Right ventricle myocardium inferior (tissue), 1 donor: ENCODE measurements at regions of chr1 and their contacts with region 1.

Region 1: DNA sequence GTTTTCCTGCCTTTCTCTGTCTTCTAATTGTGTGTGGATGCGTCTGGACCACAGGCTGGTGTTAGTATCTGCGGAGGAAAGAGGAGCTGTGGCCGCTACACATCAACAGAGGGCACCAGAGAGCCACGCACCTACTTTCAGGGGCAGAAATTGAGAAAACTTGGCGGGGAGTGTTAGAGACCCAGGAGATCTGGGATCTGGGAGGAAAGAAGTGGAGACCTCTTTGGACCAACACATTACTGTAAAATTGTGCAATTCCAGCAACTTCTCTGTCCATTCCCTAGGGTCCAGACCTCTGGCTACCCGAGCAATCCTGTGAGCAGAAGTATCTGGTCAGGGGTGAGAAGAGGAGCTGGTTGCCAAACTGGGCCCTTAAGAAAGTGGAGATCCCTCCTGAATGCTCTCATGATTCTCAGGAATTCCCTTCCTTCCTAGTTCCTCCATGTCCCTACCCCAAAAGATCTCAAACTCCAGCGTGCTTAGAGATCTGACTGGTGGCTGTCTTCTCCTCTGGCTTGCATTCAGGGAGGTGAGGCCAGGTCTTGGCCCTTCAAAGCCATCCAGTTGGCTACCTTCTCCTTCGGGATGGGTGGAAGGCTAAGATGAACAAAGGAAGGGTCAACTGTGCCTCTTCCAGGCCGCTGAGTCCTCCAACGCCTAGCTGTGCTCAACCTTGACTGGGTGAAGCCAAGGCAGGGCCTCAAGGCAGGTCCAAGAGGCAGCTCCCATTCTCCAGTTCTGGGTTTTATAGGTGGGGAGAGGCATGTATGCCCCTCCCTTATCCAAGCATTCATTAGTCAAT is 1.2 kb upstream of the KIRREL1 start:
- DNase-seq: no peak
- ATAC-seq: peak; percentile 78

Region 2: GRCh38 chr1:158019171-158019868 is 27.1 kb after region 1 on chr1:
- intact Hi-C with region 1: loop called (anchors 1 kb)
- DNase-seq: no peak
- ATAC-seq: peak; percentile 69

Region 3: GRCh38 chr1:158035976-158036583 is 43.8 kb after region 1 on chr1:
- intact Hi-C with region 1: loop called (anchors 1 kb)
- DNase-seq: no peak
- ATAC-seq: no peak

Region 4: GRCh38 chr1:158087320-158087927 is 95.2 kb after region 1 on chr1:
- intact Hi-C with region 1: loop called (anchors 1 kb)
- DNase-seq: no peak
- ATAC-seq: peak; percentile 40

Region 5: DNA sequence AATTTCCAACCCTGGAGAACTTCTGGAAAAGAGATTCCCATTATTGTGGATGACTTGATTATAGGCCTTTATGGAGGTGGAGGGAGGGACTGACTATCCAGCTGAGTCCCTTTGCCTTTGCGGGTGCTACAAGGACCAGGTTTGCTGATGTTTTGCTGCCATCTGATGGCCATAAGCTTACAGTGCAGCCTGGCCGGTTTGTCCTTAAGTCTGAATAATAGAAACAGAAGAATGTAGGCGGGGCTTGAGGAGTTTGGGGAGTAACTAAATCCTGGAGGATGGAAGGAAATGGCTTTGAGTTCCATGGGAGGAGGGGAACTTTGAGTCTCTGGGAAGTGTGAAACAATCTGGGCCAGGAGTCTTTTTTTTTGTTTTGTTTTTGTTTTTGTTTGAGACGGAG is 132.8 kb after region 1 on chr1:
- intact Hi-C with region 1: loop called (anchors 2 kb)
- DNase-seq: peak; percentile 82
- ATAC-seq: peak; percentile 97